ENCODE measurements at regions of chr20 and their contacts with region 1.

Region 1: GRCh38 chr20:37270576-37271420 is 9.2 kb upstream of the GHRH start:
- DNase-seq: no peak
- ATAC-seq: 0 out of 6 replicates have a peak, but pooled peaks of 1 of the 2 experiments have one; percentile 8
- H3K4me3 ChIP-seq: no peak overlapping the region
- H3K27ac ChIP-seq: peak overlapping the region; percentile 51 to 76; a peak in 4 of 6 replicates
- H3K4me1 ChIP-seq: peaks cover 5% of the 10 kb centered on the region; the same call in 2 of the 3 replicates
- CTCF ChIP-seq: no peak
- EP300 ChIP-seq: no peak
- POLR2A ChIP-seq: no peak
- RAD21 ChIP-seq: no peak

Region 2: GRCh38 chr20:37192137-37192854 is 78.5 kb before region 1 on chr20:
- CTCF ChIA-PET with region 1: interaction called, 12 read pairs
- POLR2A ChIA-PET with region 1: no interaction called
- DNase-seq: peak; percentile 75 to 82
- ATAC-seq: peak; percentile 91 to 94
- H3K4me3 ChIP-seq: no peak overlapping the region
- H3K27ac ChIP-seq: no peak overlapping the region
- H3K4me1 ChIP-seq: peaks cover 3% of the 10 kb centered on the region; the same call in 1 of the 3 replicates
- CTCF ChIP-seq: peak; percentile 76
- EP300 ChIP-seq: no peak
- POLR2A ChIP-seq: no peak
- RAD21 ChIP-seq: 0 out of 5 replicates have a peak, but pooled peaks have one; percentile 13 to 16

Region 3: GRCh38 chr20:37257988-37258387 is 12.8 kb before region 1 on chr20:
- CTCF ChIA-PET with region 1: interaction called, 27 read pairs
- POLR2A ChIA-PET with region 1: no interaction called
- DNase-seq: no peak
- ATAC-seq: no peak; a peak in 1 of 6 replicates
- H3K4me3 ChIP-seq: no peak overlapping the region
- H3K27ac ChIP-seq: no peak overlapping the region
- H3K4me1 ChIP-seq: no peaks in the 10 kb centered on the region
- CTCF ChIP-seq: no peak
- EP300 ChIP-seq: no peak
- POLR2A ChIP-seq: no peak
- RAD21 ChIP-seq: no peak

Region 4: DNA sequence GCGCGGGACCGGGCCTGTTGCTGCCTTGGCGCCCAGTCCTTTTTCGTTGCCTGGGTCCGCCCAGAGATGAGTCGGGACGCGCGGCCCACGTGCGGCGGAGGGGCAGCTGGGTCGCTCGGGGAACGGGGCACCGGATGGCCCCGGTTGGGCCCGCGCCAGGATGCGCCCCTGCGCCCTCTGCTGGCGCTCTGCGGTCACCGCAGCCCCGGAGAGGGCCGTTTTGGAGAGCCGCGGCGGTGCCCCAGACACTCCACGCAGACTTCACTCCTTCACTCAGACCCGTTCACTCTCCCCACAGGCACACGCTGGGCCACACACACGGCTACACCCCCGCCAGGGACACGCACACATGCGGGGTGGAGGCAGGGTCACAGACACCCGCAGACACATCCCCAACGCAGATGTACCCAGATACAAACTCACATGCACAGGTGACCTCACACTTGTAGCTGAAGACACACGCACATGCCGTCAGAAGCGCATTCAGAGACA is 113.9 kb after region 1 on chr20:
- CTCF ChIA-PET with region 1: interaction called, 91 read pairs
- POLR2A ChIA-PET with region 1: no interaction called
- DNase-seq: peak; percentile 47 to 79
- ATAC-seq: peak; percentile 16 to 21; a peak in 5 of 6 replicates
- H3K4me3 ChIP-seq: peak overlapping the region; percentile 55
- H3K27ac ChIP-seq: peak overlapping the region; percentile 96 to 98
- H3K4me1 ChIP-seq: peaks cover 86% of the 10 kb centered on the region
- CTCF ChIP-seq: peak; percentile 82
- EP300 ChIP-seq: no peak
- POLR2A ChIP-seq: no peak
- RAD21 ChIP-seq: peak; percentile 33 to 68; a peak in 4 of 5 replicates

Region 5: GRCh38 chr20:37443596-37443995 is 172.8 kb after region 1 on chr20:
- CTCF ChIA-PET with region 1: interaction called, 12 read pairs
- POLR2A ChIA-PET with region 1: no interaction called
- DNase-seq: no peak
- ATAC-seq: no peak
- H3K4me3 ChIP-seq: no peak overlapping the region
- H3K27ac ChIP-seq: no peak overlapping the region
- H3K4me1 ChIP-seq: no peaks in the 10 kb centered on the region
- CTCF ChIP-seq: no peak
- EP300 ChIP-seq: no peak
- POLR2A ChIP-seq: no peak
- RAD21 ChIP-seq: no peak

Region 6: GRCh38 chr20:37534401-37535157 is 263.8 kb after region 1 on chr20:
- CTCF ChIA-PET with region 1: interaction called, 150 read pairs
- POLR2A ChIA-PET with region 1: no interaction called
- DNase-seq: peak; percentile 38 to 79
- ATAC-seq: peak; percentile 81 to 91
- H3K4me3 ChIP-seq: no peak overlapping the region
- H3K27ac ChIP-seq: no peak overlapping the region
- H3K4me1 ChIP-seq: no peaks in the 10 kb centered on the region
- CTCF ChIP-seq: peak; percentile 92
- EP300 ChIP-seq: no peak
- POLR2A ChIP-seq: no peak
- RAD21 ChIP-seq: peak; percentile 94 to 98

Measured in A549 (cell line).